ENCODE measurements at regions of chr6 and their contacts with region 1.

Region 1: DNA sequence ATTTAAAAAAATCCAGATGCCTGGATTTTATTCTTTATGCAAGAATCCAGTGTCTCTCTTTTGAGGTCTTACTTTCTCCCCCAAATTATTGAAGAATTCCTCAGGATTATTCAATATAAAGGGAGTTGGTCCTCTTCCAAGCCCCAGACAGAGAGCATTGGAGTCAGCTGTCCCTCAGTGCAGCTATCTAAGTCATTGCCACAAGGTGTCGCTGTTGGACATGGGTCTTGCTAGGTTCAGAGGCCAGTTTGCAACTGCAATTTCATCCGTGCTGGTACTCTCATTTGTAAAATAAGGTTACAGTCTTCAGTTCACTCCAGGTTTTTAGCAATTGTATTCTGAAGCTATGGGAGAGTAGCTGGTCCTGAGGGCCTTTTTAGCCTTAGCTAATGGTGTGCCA is 27.8 kb downstream of the CCN2 start:
- DNase-seq: no peak
- H3K4me3 ChIP-seq: no peak overlapping the region
- CTCF ChIP-seq: peak; percentile 48

Region 2: GRCh38 chr6:131488780-131489179 is 434.6 kb before region 1 on chr6:
- CTCF ChIA-PET with region 1: no interaction called
- POLR2A ChIA-PET with region 1: no interaction called
- DNase-seq: no peak
- H3K4me3 ChIP-seq: no peak overlapping the region
- CTCF ChIP-seq: no peak

Region 3: DNA sequence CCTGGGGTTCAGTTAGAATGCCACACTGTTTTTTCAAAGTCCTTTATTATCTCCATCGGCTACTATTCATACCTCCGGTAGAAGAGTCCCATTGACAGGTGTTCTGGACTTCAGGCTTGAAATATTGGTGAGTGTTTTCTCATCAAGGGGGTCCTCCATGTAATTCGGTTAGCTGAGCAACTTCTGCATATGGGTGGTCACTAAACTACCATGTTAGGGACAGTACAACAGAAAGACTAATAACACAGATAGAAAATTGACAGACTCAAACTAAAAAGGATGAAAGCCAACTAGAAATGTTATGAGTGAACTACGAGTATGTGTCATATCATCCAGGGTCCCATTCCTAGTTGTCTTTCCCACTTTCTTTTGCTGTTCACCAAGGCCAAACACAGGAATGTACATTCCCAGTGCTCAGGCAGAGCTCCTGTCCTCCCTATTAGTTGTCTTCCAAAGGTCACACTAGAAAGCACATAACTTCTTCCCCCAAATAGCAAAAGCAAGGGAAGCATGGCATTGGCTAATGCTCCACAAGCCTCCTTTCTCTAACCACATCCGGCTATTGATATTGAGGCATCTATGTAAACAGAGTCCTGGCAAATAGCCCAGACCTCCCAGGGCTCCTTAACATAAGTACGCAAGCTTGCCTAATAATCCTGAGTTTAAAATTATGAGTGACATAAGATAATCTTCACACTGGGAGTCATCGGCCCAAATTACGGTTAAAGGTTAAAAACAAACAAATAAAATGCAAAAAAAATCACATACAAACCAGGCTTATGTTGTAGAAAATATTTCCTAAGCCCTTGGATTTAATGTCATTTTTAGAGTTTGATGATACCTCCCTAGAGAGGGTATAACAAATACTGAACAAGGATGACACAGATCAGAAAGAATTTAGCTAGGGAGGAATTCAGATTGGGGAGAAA is 14.6 kb after region 1 on chr6:
- CTCF ChIA-PET with region 1: interaction called, 37 read pairs
- POLR2A ChIA-PET with region 1: no interaction called
- DNase-seq: peak; percentile 64
- H3K4me3 ChIP-seq: no peak overlapping the region
- CTCF ChIP-seq: no peak

Region 4: DNA sequence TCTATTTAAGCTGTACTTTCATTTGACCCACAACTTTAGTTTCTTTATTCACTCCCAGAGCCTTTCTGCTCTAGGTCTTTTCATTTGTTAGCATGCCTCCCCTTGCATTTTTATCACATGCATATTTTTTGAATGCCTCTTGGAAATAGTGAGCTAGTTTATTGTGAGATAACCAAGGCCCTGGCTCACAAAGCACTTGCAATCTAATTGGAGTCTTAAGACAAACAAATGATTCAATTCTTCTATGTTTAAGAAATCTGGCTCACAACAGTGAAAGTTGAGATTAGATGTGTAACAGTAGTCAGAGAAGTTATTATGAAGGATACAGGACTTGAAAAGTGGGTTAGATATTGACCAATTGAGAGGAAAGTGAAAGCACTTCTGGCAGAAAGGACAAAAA is 304.5 kb after region 1 on chr6:
- CTCF ChIA-PET with region 1: interaction called, 32 read pairs
- POLR2A ChIA-PET with region 1: no interaction called
- DNase-seq: peak; percentile 78
- H3K4me3 ChIP-seq: no peak overlapping the region
- CTCF ChIP-seq: no peak

Region 5: DNA sequence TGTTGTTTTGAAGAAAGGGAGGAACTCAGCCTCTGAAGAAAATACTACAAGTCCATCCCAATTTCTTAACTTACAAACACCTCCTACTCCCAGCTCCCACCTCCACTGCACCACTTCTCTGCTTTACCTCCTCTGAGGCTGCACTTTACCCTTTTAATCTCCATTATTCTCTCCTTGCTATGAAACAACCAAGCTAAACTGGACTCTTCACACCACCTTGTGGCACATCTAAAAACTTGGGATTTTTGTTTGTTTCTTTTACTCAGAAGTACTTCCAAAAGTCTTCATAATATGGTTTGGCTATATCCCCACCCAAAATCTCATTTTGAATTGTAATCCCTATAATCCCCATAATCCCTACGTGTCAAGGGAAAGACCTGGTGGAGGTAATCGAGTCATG is 335.7 kb after region 1 on chr6:
- CTCF ChIA-PET with region 1: interaction called, 173 read pairs
- POLR2A ChIA-PET with region 1: no interaction called
- DNase-seq: no peak
- H3K4me3 ChIP-seq: no peak overlapping the region
- CTCF ChIP-seq: peak; percentile 19

Region 6: DNA sequence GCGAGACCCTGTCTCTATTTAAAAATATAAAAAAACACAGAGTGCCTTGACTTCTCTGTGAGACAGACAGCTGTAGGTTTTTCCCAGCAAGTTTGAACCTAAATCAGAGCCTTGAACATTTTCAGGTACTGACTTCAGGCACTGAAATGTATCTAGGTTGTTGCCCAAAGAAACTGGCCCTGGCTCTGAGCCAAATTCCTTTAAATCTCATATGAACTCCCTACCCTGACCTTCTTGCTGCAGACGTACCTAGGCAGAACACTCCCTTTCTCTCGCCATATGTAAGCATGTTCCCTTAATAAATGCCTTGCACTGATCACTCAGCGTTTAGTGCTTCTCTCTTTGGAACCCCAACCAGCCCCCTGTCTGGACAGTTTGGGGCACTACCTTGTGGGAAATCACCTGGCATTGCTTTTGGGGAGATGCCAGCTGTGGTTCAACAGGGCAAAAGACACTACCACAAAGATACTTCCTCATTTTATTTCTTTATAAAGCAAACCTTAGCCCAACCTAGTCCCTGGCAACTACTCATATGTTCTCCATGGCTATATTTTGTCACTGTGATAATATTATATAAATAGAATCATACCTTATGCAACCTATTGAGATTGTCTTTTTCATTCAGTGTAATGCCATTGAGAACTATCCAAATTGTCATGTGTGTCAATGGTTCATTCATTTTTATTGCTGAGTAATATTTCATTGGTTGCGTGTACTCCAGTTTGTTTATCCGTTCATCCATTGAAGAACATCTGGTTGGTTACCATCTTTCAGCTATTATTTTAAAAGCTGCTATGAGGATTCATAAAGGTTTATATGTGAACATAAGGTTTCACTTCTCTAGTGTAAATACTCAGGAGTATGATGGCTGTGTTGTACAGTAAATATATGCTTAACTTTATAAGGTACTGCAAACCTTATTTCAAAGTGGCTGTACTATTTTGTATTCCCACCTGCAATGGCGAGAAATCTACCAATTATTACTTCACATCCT is 363.0 kb after region 1 on chr6:
- CTCF ChIA-PET with region 1: interaction called, 166 read pairs
- POLR2A ChIA-PET with region 1: no interaction called
- DNase-seq: no peak
- H3K4me3 ChIP-seq: no peak overlapping the region
- CTCF ChIP-seq: no peak